Cardiac septum (tissue), 1 donor: ENCODE measurements at regions of chr14 and their contacts with region 1.

Region 1: DNA sequence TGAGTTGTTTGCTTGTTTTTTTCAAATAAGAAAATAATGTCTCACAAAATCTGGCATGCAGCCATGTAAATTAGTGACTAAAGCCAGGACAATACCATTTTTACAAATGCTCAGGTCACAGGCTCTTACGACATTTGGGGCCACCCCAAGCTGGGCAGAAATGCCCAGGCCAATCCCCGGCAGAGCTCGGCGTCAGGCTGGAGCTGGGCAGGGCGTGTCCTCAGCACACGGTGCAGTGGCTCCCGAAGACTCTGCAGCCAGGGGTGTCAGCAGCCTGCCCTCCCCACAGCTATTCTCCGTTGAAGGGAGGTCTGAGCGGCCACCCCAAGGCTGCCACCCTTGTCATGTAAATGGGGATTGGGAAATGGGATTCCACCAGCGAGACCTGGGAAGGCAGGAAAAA is 158.7 kb downstream of the DICER1 start:
- DNase-seq: no peak

Region 2: GRCh38 chr14:95034788-95035187 is 36.1 kb after region 1 on chr14:
- intact Hi-C with region 1: no loop called
- DNase-seq: no peak

Region 3: DNA sequence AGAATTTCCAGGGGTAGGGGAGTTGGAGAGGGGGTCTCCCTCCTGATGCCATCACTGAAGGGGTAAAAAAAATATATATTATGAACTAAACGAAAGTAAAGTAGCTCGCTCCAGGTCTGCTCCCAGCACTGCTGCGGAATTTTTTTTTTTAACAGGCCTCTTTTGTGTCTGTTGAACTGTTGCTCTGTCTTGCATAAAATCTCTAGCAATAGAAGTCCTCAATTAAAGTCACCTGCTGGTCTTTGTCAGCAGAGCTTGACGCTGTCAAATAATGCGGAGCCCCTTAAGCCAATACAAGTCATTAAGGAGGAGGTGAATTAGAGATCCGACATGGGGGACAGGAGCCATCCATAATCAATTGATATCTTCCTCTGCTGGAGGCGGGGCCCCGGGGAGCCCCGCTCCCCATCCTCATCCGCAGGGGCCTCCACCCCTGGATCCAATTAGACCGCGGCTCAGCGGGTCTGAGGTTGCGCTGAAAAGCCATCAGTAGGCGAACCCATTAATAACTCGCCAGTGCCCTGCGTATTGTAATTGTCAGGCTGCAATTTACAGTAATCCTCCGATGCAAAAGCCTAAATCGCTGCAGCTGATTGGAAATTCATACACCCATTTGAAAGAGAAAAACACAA is 73.1 kb after region 1 on chr14:
- intact Hi-C with region 1: loop called (anchors 5 kb)
- DNase-seq: no peak